ENCODE measurements at regions of chr13 and their contacts with region 1.

Region 1: GRCh38 chr13:99900960-99901359 is 70.6 kb downstream of the ZIC5 start:
- H3K4me3 Mint-ChIP-seq: no peak overlapping the region
- H3K27ac Mint-ChIP-seq: no peak overlapping the region
- H3K4me1 Mint-ChIP-seq: no peaks in the 10 kb centered on the region
- H3K27me3 Mint-ChIP-seq: peaks cover 78% of the 10 kb centered on the region

Region 2: GRCh38 chr13:100514788-100515409 is 613.9 kb after region 1 on chr13:
- intact Hi-C with region 1: loop called (anchors 5 kb)
- H3K4me3 Mint-ChIP-seq: no peak overlapping the region
- H3K27ac Mint-ChIP-seq: no peak overlapping the region
- H3K4me1 Mint-ChIP-seq: peaks cover 21% of the 10 kb centered on the region
- H3K27me3 Mint-ChIP-seq: peaks cover 19% of the 10 kb centered on the region